RWPE1 (cell line): ENCODE measurements at regions of chr4 and their contacts with region 1.

Region 1: GRCh38 chr4:26862381-26862915 is 1.8 kb downstream of the STIM2 start:
- DNase-seq: no peak
- H3K27ac ChIP-seq: no peak overlapping the region
- CTCF ChIP-seq: no peak

Region 2: DNA sequence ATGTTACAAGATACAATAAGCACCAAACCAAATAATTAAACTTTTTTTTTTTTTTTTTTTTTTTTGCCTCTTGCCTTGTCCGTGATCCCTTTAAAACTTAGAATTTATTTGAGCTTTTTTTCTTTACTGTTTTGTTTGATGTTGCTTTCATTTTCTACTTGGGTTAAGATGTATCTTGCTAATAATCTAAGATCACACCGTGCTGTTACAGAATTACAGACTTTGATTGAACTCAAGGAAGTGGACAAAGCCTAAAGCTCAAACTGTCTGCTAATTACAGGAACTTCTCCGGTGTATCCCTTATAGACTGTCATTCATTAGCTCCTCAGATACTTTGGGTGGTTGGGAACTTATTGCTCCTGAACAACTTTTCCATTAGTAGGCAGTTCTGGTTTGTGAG is 24.7 kb after region 1 on chr4:
- CTCF ChIA-PET with region 1: no interaction called
- POLR2A ChIA-PET with region 1: interaction called, 17 read pairs
- DNase-seq: no peak
- H3K27ac ChIP-seq: no peak overlapping the region
- CTCF ChIP-seq: no peak